ENCODE measurements at regions of chr16 and their contacts with region 1.

Region 1: DNA sequence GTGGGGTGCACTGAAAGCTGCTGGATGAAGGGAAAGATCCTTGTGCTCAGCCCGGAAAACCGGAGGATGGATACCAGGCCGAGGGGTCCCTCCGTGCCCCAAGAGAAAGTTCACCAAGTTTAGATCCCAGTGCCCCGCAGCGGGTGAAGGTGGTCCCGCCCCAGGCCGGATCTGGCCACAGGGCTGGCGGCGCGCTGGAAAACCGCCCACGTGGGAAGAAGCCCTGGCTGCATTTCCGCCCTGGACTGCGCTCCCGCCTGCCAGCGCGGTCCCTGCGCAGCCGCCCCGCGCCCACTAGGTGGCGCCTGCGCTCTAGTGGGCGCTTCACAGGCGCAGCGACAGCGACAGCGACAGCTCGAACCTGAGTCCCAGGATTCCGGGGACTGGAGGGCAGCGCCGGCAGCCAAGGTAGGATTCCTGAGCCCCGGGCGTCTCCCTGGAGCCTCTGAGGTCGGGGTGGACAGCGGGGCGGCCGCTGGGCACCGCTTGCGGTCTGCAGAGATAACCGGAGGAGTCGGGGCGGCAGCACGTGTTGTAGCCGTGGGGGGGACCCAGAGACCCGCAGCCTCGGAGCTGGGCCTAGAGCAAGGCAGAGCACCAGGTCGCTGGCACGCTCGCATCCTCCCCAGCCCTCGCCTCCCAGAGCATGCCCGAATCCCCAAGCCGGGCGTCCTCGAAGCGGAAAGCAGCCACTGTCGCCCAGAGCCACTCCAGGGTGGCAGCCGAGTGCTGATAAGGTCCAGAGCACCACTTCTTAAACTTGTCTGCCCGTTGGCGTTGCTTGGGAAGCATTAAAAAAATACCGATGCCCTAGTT is at the start of gene CHD9:
- DNase-seq: peak; percentile 88
- ATAC-seq: peak; percentile 93
- H3K4me3 Mint-ChIP-seq: peak within 1 kb of the TSS; percentile 84
- H3K27ac Mint-ChIP-seq: peak within 1 kb of the TSS; percentile 82
- H3K4me1 Mint-ChIP-seq: peaks cover 27% of the 10 kb centered on the region
- H3K27me3 Mint-ChIP-seq: no peaks in the 10 kb centered on the region
- total RNA-seq, gene CHD9: 30.2 to 37.9 TPM

Region 2: GRCh38 chr16:53078765-53079485 is 24.0 kb after region 1 on chr16:
- POLR2A ChIA-PET with region 1: no interaction called
- DNase-seq: no peak
- ATAC-seq: no peak
- H3K4me3 Mint-ChIP-seq: no peak overlapping the region
- H3K27ac Mint-ChIP-seq: no peak overlapping the region
- H3K4me1 Mint-ChIP-seq: peaks cover 5% of the 10 kb centered on the region
- H3K27me3 Mint-ChIP-seq: no peaks in the 10 kb centered on the region

Region 3: GRCh38 chr16:53099318-53100130 is 44.6 kb after region 1 on chr16:
- POLR2A ChIA-PET with region 1: interaction called, 12 read pairs
- DNase-seq: peak; percentile 61
- ATAC-seq: peak; percentile 77
- H3K4me3 Mint-ChIP-seq: peak overlapping the region; percentile 86
- H3K27ac Mint-ChIP-seq: peak overlapping the region; percentile 86
- H3K4me1 Mint-ChIP-seq: peaks cover 16% of the 10 kb centered on the region
- H3K27me3 Mint-ChIP-seq: no peaks in the 10 kb centered on the region